ENCODE measurements at regions of chr1 and their contacts with region 1.

Region 1: GRCh38 chr1:226736908-226737818 is 1.9 kb downstream of the ITPKB start:
- DNase-seq: peak; percentile 40 to 77 (median 51)
- ATAC-seq: peak in 3 of 4 donors; percentile 17 to 68 (median 56)
- H3K4me3 ChIP-seq: peak overlapping the region; percentile 54 to 98 (median 88)
- H3K27ac ChIP-seq: peak overlapping the region; percentile 84 to 96 (median 92)
- H3K4me1 ChIP-seq: peaks cover 0 to 62% (median 34%) of the 10 kb centered on the region in 12 donors
- H3K27me3 ChIP-seq: no peaks in the 10 kb centered on the region
- CTCF ChIP-seq: peak in 2 of 12 donors; percentile 21 to 29
- POLR2A ChIP-seq: no peak

Region 2: DNA sequence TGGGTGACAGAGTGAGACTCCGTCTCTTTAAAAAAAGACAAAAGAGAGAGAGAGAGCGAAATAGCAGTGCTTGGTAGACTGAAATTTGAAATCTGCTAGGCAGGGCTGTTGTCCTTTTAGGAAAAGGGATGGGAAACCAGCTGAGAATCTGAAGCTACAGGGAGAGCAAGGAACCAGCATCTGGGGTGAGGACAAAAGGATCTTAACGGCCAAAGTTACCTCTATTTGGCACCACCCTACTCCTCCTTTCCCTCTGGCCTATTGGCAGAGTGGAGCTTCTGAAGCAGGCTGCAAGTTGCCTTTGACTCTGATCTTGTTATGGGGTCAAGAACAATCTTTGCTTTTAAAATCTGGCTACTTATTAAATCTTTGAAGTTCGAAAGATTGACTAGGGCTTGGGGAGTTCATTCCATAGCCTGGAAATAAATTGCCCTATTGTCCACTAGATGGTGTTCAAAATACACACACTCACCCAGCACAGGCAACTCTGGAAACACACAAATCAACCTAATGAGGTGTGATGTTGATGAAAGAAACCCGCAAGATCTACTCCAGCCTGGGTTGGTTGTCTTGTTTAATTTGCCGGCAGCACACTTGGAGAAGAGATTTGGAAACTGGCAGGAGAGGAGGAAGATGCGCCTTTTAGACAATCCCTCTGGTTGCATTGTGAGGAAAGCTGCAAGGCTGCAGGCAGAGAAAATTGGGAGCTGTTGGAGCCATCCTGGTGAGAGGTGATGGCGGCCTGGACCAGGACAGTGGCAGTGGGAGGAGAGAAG is 312.7 kb before region 1 on chr1:
- intact Hi-C with region 1: no loop called
- DNase-seq: no peak
- ATAC-seq: peak in 3 of 4 donors; percentile 71 to 84 (median 77)
- H3K4me3 ChIP-seq: no peak overlapping the region
- H3K27ac ChIP-seq: no peak overlapping the region
- H3K4me1 ChIP-seq: peaks cover 0 to 9% (median 0%) of the 10 kb centered on the region in 12 donors
- H3K27me3 ChIP-seq: no peaks in the 10 kb centered on the region
- CTCF ChIP-seq: peak; percentile 37 to 71 (median 61)
- POLR2A ChIP-seq: no peak

Region 3: GRCh38 chr1:226634166-226634588 is 103.0 kb before region 1 on chr1:
- intact Hi-C with region 1: loop called in 4 of 10 experiments (anchors 5 kb)
- DNase-seq: peak; percentile 79 to 90 (median 81)
- ATAC-seq: peak; percentile 76 to 82 (median 80)
- H3K4me3 ChIP-seq: no peak overlapping the region
- H3K27ac ChIP-seq: peak overlapping the region in 9 of 12 donors; percentile 1 to 81 (median 39)
- H3K4me1 ChIP-seq: peaks cover 0 to 45% (median 24%) of the 10 kb centered on the region in 12 donors
- H3K27me3 ChIP-seq: no peaks in the 10 kb centered on the region
- CTCF ChIP-seq: peak; percentile 83 to 99 (median 94)
- POLR2A ChIP-seq: no peak

Region 4: GRCh38 chr1:226649780-226650179 is 87.4 kb before region 1 on chr1:
- intact Hi-C with region 1: loop called in 4 of 10 experiments (anchors 5 to 10 kb)
- DNase-seq: peak in 2 of 5 donors; percentile 40 to 41
- ATAC-seq: peak in 1 of 4 donors; percentile 21
- H3K4me3 ChIP-seq: no peak overlapping the region
- H3K27ac ChIP-seq: peak overlapping the region in 5 of 12 donors; percentile 12 to 52 (median 38)
- H3K4me1 ChIP-seq: peaks cover 4 to 56% (median 32%) of the 10 kb centered on the region in 12 donors
- H3K27me3 ChIP-seq: no peaks in the 10 kb centered on the region
- CTCF ChIP-seq: peak in 10 of 12 donors; percentile 4 to 48 (median 26)
- POLR2A ChIP-seq: no peak

Region 5: GRCh38 chr1:226662642-226663326 is 74.4 kb before region 1 on chr1:
- intact Hi-C with region 1: loop called in 6 of 10 experiments (anchors 5 kb)
- DNase-seq: peak; percentile 73 to 83 (median 79)
- ATAC-seq: peak; percentile 39 to 76 (median 70)
- H3K4me3 ChIP-seq: peak overlapping the region in 1 of 12 donors; percentile 23
- H3K27ac ChIP-seq: peak overlapping the region in 10 of 12 donors; percentile 61 to 95 (median 89)
- H3K4me1 ChIP-seq: peaks cover 0 to 100% (median 88%) of the 10 kb centered on the region in 12 donors
- H3K27me3 ChIP-seq: no peaks in the 10 kb centered on the region
- CTCF ChIP-seq: no peak
- POLR2A ChIP-seq: peak in 1 of 2 donors; percentile 53

Region 6: DNA sequence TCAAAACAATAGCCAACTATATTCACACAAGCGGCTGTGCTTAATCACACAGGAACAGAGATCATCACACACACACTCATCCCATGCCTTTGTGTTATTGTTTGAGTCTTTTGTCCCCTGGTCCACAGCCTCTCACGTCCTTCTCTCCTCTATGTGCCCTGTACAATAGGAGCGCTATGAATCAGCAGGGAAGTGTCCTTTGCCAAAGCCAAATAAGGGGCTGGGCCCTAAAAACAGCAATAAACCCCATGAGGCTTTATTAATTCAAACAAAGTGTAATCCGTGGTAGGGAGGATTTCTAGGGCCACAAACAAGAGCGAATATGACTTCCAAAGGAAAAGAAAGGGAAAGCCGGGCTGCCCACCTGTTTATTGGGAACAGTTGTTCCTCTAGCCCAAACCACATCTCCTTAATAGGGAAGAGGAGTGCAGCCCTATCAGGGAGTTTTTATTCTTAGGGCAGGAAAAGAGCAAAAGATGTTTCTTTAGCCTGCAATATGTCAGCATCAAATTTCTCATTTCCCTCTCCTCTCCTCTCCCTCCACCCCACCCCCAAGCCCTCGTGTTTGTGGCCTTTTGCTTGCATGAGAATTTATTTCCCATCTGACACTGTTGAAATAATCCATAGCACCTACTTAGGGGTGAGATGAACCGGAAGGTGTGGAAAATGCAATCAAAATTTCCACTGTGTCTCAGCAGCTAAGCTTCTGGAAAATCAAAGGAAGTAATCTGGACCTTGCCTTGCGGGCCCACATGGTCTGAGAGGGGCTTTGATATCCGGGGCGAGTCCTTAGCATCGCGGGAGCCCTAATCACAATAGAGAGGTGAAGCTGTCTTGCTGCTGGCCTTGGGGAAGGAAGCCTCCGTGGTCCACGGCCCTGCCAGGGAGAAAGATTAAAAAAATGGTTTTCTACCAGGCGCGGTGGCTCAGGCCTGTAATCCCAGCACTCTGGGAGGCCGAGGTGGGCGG is 47.2 kb after region 1 on chr1:
- intact Hi-C with region 1: loop called in 1 of 10 experiments (anchors 5 kb)
- DNase-seq: no peak
- ATAC-seq: peak in 2 of 4 donors; percentile 34 to 71
- H3K4me3 ChIP-seq: no peak overlapping the region
- H3K27ac ChIP-seq: peak overlapping the region in 2 of 12 donors; percentile 18 to 85
- H3K4me1 ChIP-seq: peaks cover 0 to 11% (median 0%) of the 10 kb centered on the region in 12 donors
- H3K27me3 ChIP-seq: no peaks in the 10 kb centered on the region
- CTCF ChIP-seq: no peak
- POLR2A ChIP-seq: no peak

Region 7: GRCh38 chr1:226820941-226821718 is 84.0 kb after region 1 on chr1:
- intact Hi-C with region 1: loop called (anchors 1 to 10 kb)
- DNase-seq: peak in 4 of 5 donors; percentile 87 to 91 (median 88)
- ATAC-seq: peak; percentile 86 to 97 (median 96)
- H3K4me3 ChIP-seq: no peak overlapping the region
- H3K27ac ChIP-seq: peak overlapping the region; percentile 39 to 88 (median 72)
- H3K4me1 ChIP-seq: peaks cover 3 to 37% (median 24%) of the 10 kb centered on the region in 12 donors
- H3K27me3 ChIP-seq: no peaks in the 10 kb centered on the region
- CTCF ChIP-seq: no peak
- POLR2A ChIP-seq: no peak

Measured in heart left ventricle (tissue), 16 donors.